Lower leg skin (tissue), 4 donors: ENCODE measurements at regions of chr10 and their contacts with region 1.

Region 1: DNA sequence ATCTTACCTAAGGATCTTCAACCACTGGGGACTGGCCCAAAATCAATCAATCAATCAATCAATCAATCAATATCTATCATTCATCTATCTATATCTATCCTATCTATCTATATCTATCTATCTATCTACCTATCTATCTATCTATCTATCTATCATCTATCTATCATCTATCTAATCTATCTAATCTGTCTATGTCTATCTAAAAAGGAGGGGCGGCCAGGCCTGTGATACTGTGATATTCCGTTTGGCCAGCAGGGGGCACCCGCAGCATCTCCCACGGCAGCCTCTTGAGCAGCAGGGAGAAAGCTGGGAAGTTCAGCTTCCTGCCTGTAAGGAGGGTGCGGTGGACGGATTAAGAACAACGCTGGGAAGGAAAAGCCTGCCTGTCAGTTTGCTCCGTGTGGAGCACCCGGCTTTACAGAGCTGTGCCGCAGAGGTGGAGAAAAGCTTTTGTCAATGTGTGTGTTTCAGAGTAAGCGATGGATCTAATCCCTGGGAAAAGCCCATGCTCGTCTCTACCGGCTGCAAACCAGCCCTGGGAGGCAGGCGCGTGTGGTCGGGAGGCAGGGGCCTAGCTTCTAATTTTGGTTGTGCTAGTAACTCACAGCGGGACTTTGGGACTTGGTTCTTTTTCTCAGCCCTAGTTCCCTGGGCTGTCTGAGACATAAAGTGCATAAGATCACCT is 125.0 kb downstream of the SH2D4B start:
- DNase-seq: peak; percentile 69 to 96
- H3K4me3 ChIP-seq: no peak overlapping the region
- CTCF ChIP-seq: peak in 1 of 3 donors; percentile 81
- POLR2A ChIP-seq: no peak

Region 2: GRCh38 chr10:80460399-80461207 is 202.1 kb before region 1 on chr10:
- intact Hi-C with region 1: no loop called
- DNase-seq: peak; percentile 80 to 91
- H3K4me3 ChIP-seq: no peak overlapping the region
- CTCF ChIP-seq: no peak
- POLR2A ChIP-seq: no peak

Region 3: GRCh38 chr10:80924063-80924952 is 261.6 kb after region 1 on chr10:
- intact Hi-C with region 1: loop called (anchors 10 kb)
- DNase-seq: no peak
- H3K4me3 ChIP-seq: no peak overlapping the region
- CTCF ChIP-seq: no peak
- POLR2A ChIP-seq: no peak

Region 4: DNA sequence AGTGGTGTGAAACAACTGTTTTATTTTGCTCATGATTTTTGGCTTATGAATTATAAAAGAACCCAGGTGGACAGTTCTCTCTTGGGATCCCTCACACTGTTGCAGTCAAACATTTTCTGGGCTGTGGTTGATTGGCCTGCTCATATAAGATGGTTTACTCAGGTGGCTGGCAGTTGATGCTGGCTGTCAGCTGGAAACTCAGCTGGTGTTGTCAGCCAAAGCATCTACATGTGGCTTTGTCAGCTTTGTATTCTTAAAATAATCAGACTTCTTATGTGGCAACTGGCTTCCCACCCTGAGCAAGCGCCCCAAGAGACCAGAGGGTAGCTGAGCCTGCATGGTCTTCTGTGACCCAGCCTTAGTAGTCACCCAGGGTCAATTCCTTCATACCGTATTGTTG is 1747.0 kb after region 1 on chr10:
- intact Hi-C with region 1: loop called (anchors 5 kb)
- DNase-seq: no peak
- H3K4me3 ChIP-seq: no peak overlapping the region
- CTCF ChIP-seq: no peak
- POLR2A ChIP-seq: no peak